SK-N-SH (cell line): ENCODE measurements at regions of chr3 and their contacts with region 1.

Region 1: GRCh38 chr3:102235679-102236078 is 199.1 kb upstream of the ZPLD1 start:
- DNase-seq: no peak
- H3K4me3 ChIP-seq: no peak overlapping the region
- H3K27ac ChIP-seq: no peak overlapping the region
- H3K4me1 ChIP-seq: no peaks in the 10 kb centered on the region
- H3K27me3 ChIP-seq: no peaks in the 10 kb centered on the region
- CTCF ChIP-seq: peak; percentile 35
- EP300 ChIP-seq: no peak
- RAD21 ChIP-seq: peak; percentile 66

Region 2: DNA sequence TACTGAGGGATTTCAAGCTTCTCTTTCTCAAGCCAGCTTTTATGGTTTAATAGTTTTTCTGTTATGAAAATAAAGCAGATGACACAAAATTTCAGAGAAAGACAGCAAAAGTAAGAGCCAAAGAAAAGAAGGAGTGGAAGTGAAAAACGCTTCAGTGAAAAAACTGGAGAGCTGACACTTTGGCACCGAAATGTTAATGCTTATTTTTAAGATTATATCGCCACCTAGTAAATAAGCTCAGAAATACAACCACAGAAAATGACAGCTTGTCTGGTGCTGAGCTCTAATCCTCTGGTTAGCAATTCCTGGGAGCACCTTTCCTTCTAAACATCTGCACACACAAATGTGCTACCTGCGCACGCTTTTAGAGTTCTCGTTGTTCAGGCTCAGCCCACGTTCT is 300.8 kb after region 1 on chr3:
- CTCF ChIA-PET with region 1: interaction called, 151 read pairs
- POLR2A ChIA-PET with region 1: no interaction called
- DNase-seq: peak; percentile 39
- H3K4me3 ChIP-seq: peak overlapping the region in 1 of 2 experiments; percentile 21; a peak in 1 of 4 replicates
- H3K27ac ChIP-seq: no peak overlapping the region
- H3K4me1 ChIP-seq: no peaks in the 10 kb centered on the region; a peak in 2 of 4 replicates
- H3K27me3 ChIP-seq: no peaks in the 10 kb centered on the region
- CTCF ChIP-seq: peak; percentile 66
- EP300 ChIP-seq: no peak
- RAD21 ChIP-seq: peak; percentile 87